Calu3 (cell line): ENCODE measurements at regions of chr17 and their contacts with region 1.

Region 1: DNA sequence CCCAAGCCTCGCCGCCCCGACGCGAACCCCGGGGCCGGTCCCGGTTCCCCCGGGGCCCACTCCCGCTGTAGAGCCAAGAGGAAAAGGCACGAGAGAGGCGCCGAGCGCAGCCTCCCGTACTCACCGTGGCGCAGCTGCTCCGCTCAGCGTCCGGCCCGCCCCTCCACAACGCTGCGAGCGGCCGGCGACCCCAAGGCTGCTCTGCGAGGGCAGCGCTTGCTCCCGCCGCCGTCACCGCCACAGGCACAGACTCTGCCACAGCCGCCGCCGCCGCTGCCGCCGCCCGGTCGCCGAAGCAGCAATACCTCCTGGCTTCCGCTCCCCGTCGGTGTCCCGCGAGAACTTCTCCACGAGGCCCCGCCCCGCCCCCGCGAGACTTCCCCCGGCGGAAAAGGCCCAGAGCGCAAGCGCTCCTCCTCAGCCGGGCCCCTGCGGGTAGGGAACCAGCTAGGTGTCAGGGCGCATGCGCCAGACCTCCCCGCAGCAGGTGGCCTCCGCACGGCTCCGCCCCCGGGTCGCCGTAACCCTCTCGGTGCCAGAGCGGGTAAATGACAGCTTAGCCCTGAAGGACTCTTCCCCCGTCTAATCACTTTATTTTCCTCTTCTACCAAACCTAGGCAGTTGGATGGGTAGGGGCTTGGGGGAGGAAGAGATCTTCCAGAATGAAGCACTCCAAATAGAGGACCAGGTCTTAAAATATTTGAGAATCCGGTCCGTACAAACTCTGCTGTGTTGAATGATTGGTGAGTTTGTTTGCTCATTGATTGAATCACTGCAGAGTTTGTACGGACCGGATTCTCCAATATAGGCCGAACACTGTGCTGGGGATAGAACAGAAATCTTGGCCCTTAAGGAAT is at the start of gene GRB2:
- DNase-seq: peak; percentile 99
- H3K4me3 Mint-ChIP-seq: peak within 1 kb of the TSS; percentile 73
- H3K27ac Mint-ChIP-seq: peak within 1 kb of the TSS; percentile 55
- H3K4me1 Mint-ChIP-seq: peaks cover 13% of the 10 kb centered on the region
- H3K27me3 Mint-ChIP-seq: peaks cover 39% of the 10 kb centered on the region
- CTCF ChIP-seq: no peak
- total RNA-seq, gene GRB2: 79.7 and 99.9 TPM in 2 replicates

Region 2: GRCh38 chr17:74545843-74546230 is 859.8 kb before region 1 on chr17 and contains the start of gene CD300C:
- CTCF ChIA-PET with region 1: no interaction called
- intact Hi-C with region 1: no loop called
- DNase-seq: no peak
- H3K4me3 Mint-ChIP-seq: no peak within 1 kb of the TSS
- H3K27ac Mint-ChIP-seq: no peak within 1 kb of the TSS
- H3K4me1 Mint-ChIP-seq: no peaks in the 10 kb centered on the region
- H3K27me3 Mint-ChIP-seq: peaks cover 88% of the 10 kb centered on the region
- CTCF ChIP-seq: no peak
- total RNA-seq, gene CD300C: not detected in 2 replicates

Region 3: GRCh38 chr17:75271233-75271954 is 134.2 kb before region 1 on chr17:
- CTCF ChIA-PET with region 1: interaction called, 11 read pairs
- intact Hi-C with region 1: no loop called
- DNase-seq: peak; percentile 92
- H3K4me3 Mint-ChIP-seq: peak overlapping the region; percentile 91
- H3K27ac Mint-ChIP-seq: peak overlapping the region; percentile 73
- H3K4me1 Mint-ChIP-seq: peaks cover 13% of the 10 kb centered on the region
- H3K27me3 Mint-ChIP-seq: no peaks in the 10 kb centered on the region
- CTCF ChIP-seq: peak; percentile 70

Region 4: DNA sequence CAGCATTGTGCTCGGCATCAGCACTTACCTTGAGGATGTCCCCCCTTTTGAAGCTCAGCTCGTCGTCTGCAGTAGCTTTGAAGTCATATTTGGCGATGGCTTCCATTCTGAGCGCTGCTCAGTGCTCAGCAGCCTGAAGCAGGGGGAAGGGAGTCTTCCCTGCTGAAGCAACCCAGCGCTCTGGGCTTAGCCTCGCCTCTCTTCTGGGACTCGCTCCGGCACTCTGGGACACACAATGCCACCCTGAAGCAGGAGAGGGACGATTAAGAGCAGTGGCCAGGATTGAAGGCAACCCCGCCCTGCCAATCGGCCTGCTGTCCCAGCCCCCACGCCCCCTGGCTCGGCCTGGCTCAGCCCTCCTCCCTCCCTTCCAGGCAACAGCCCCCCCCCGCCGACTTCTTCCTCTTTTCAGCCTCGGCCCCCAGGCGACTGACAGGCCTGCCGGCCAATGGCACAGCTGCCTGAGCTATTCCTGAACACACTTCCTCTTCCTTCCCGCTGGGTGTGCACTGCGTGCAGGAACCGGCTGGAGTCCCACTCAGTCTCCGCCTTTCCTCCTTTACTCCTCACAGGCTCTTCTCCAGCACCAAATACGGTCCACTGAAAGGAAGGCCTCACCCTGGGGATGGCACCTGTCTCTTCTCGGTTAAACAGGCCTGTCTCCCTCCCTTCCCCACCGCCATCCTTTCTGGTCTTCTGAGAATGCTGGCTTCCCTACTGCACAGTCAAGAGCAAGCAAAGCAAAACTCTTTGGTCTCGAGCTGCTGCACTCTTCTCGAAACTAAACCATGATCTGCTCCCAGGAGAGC is 11.9 kb before region 1 on chr17:
- CTCF ChIA-PET with region 1: interaction called, 10 read pairs
- intact Hi-C with region 1: no loop called
- DNase-seq: peak; percentile 98
- H3K4me3 Mint-ChIP-seq: peak overlapping the region; percentile 96
- H3K27ac Mint-ChIP-seq: peak overlapping the region; percentile 92
- H3K4me1 Mint-ChIP-seq: peaks cover 49% of the 10 kb centered on the region
- H3K27me3 Mint-ChIP-seq: no peaks in the 10 kb centered on the region
- CTCF ChIP-seq: no peak

Region 5: GRCh38 chr17:75571197-75571873 is 165.7 kb after region 1 on chr17:
- CTCF ChIA-PET with region 1: no interaction called
- intact Hi-C with region 1: no loop called
- DNase-seq: no peak
- H3K4me3 Mint-ChIP-seq: no peak overlapping the region
- H3K27ac Mint-ChIP-seq: no peak overlapping the region
- H3K4me1 Mint-ChIP-seq: no peaks in the 10 kb centered on the region
- H3K27me3 Mint-ChIP-seq: no peaks in the 10 kb centered on the region
- CTCF ChIP-seq: no peak